A549 (cell line): ENCODE measurements at regions of chr17 and their contacts with region 1.

Region 1: GRCh38 chr17:45782889-45783592 is 1.1 kb upstream of the CRHR1 start:
- DNase-seq: peak; percentile 58 to 76
- ATAC-seq: peak; percentile 64 to 89
- H3K4me3 ChIP-seq: peak overlapping the region; percentile 50
- H3K27ac ChIP-seq: peak overlapping the region in 1 of 2 experiments; percentile 75; a peak in 2 of 6 replicates
- H3K4me1 ChIP-seq: peaks cover 5% of the 10 kb centered on the region; the same call in 1 of the 3 replicates
- CTCF ChIP-seq: peak; percentile 79
- EP300 ChIP-seq: no peak
- POLR2A ChIP-seq: no peak
- RAD21 ChIP-seq: peak; percentile 24 to 38; a peak in 3 of 5 replicates

Region 2: GRCh38 chr17:45719335-45720071 is 63.5 kb before region 1 on chr17:
- CTCF ChIA-PET with region 1: interaction called, 13 read pairs
- POLR2A ChIA-PET with region 1: no interaction called
- DNase-seq: peak; percentile 77 to 82
- ATAC-seq: peak; percentile 89 to 93
- H3K4me3 ChIP-seq: no peak overlapping the region
- H3K27ac ChIP-seq: no peak overlapping the region
- H3K4me1 ChIP-seq: peaks cover 5% of the 10 kb centered on the region; the same call in 2 of the 3 replicates
- CTCF ChIP-seq: 0 out of 3 replicates have a peak, but pooled peaks have one; percentile 24
- EP300 ChIP-seq: no peak
- POLR2A ChIP-seq: no peak
- RAD21 ChIP-seq: peak in 1 of 2 experiments; percentile 21; a peak in 1 of 5 replicates

Region 3: DNA sequence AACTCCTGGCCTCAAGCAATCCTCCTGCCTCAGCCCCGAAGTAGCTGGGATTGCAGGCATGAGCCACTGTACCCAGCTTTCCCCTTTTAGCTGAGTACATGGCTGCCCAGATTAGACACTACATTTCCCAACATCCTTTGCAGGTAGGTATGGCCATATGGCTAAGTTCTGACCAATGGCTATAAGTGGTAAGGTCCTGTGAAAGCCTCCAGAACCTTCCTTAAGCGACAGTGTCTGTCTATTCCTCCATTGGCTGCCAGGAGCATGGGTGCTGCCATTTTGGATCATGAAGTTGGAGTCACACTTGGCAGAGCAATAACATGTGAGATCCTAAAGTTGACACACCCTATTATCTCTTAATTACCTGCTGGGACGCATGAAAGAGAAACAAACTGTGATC is 23.3 kb before region 1 on chr17:
- CTCF ChIA-PET with region 1: interaction called, 15 read pairs
- POLR2A ChIA-PET with region 1: no interaction called
- DNase-seq: peak; percentile 26 to 63
- ATAC-seq: peak in 1 of 2 experiments; percentile 83; a peak in 3 of 6 replicates
- H3K4me3 ChIP-seq: no peak overlapping the region
- H3K27ac ChIP-seq: no peak overlapping the region
- H3K4me1 ChIP-seq: no peaks in the 10 kb centered on the region
- CTCF ChIP-seq: no peak
- EP300 ChIP-seq: no peak
- POLR2A ChIP-seq: no peak
- RAD21 ChIP-seq: no peak

Region 4: GRCh38 chr17:45812102-45812501 is 29.1 kb after region 1 on chr17:
- CTCF ChIA-PET with region 1: interaction called, 15 read pairs
- POLR2A ChIA-PET with region 1: no interaction called
- DNase-seq: peak; percentile 40 to 64
- ATAC-seq: peak; percentile 30 to 48; a peak in 3 of 6 replicates
- H3K4me3 ChIP-seq: no peak overlapping the region
- H3K27ac ChIP-seq: no peak overlapping the region
- H3K4me1 ChIP-seq: no peaks in the 10 kb centered on the region
- CTCF ChIP-seq: 0 out of 3 replicates have a peak, but pooled peaks have one; percentile 12
- EP300 ChIP-seq: no peak
- POLR2A ChIP-seq: no peak
- RAD21 ChIP-seq: no peak

Region 5: GRCh38 chr17:45834471-45835396 is 51.7 kb after region 1 on chr17:
- CTCF ChIA-PET with region 1: interaction called, 58 read pairs
- POLR2A ChIA-PET with region 1: no interaction called
- DNase-seq: peak; percentile 51 to 60
- ATAC-seq: peak; percentile 29 to 48
- H3K4me3 ChIP-seq: no peak overlapping the region
- H3K27ac ChIP-seq: peak overlapping the region in 1 of 2 experiments; percentile 17; a peak in 2 of 6 replicates
- H3K4me1 ChIP-seq: peaks cover 6% of the 10 kb centered on the region; the same call in 2 of the 3 replicates
- CTCF ChIP-seq: no peak
- EP300 ChIP-seq: no peak
- POLR2A ChIP-seq: no peak
- RAD21 ChIP-seq: no peak